Aorta (tissue), 5 donors: ENCODE measurements at regions of chr20 and their contacts with region 1.

Region 1: DNA sequence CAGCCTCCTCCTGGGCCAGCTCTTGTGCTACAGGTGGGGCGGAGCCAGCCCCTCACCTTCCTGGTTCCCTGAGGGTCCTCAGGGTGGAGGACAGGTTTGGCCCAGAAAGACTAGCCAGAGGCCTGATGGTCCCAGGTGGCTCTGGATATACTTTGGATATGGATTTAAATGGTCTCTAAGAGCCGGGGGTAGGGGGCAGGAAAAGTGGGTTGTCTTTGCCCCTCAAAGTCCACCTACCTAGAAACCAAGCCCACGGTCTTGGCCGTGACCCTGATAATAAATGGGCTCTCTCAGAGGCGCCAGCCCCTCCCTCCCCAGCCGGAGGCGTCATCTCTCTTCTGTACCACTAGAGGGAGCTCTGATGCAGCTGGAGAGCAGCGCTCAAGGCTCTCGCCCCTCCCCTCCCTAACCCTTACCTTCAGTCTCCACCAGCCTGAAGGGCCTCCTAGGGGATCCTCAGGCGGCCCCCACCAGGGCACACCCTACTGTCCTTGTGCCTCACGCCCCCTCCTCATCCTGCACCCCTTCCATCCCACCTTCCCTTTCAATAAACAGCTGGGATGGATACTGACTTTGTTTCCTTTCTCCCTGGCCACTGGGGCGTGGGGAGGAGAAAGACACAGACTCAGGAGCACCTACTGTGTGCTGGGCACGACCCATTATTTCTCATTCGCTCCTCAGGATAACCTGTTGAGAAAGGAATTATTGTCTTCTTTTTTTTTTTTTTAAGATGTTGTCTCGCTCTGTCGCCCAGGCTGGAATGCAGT is 7.6 kb downstream of the NRSN2 start:
- DNase-seq: peak; percentile 77 to 89
- ATAC-seq: peak; percentile 95
- H3K4me3 ChIP-seq: no peak overlapping the region
- H3K27ac ChIP-seq: no peak overlapping the region
- H3K4me1 ChIP-seq: no peaks in the 10 kb centered on the region
- H3K27me3 ChIP-seq: no peaks in the 10 kb centered on the region

Region 2: DNA sequence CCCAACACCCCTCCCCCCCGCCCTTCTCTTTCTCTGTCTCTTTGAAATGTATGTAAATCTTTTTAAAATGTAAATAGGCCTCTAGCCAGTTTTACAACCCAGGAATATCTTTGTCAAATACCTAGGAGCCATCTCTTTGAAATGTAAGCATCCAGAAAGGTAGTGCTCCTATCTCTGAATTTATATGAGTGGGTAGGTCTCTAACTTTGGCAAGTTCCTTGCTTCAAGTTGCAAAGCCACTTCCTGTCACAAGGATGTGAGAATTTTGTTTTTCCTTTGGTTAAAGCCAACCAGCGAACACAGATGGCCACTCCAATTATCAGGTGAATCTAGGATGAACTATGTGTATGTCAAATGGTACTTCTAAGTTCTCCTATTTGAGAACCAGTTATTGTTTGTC is 103.1 kb before region 1 on chr20:
- intact Hi-C with region 1: no loop called
- DNase-seq: no peak
- ATAC-seq: no peak
- H3K4me3 ChIP-seq: no peak overlapping the region
- H3K27ac ChIP-seq: no peak overlapping the region
- H3K4me1 ChIP-seq: no peaks in the 10 kb centered on the region
- H3K27me3 ChIP-seq: peaks cover 0 to 1% of the 10 kb centered on the region in 2 donors

Region 3: DNA sequence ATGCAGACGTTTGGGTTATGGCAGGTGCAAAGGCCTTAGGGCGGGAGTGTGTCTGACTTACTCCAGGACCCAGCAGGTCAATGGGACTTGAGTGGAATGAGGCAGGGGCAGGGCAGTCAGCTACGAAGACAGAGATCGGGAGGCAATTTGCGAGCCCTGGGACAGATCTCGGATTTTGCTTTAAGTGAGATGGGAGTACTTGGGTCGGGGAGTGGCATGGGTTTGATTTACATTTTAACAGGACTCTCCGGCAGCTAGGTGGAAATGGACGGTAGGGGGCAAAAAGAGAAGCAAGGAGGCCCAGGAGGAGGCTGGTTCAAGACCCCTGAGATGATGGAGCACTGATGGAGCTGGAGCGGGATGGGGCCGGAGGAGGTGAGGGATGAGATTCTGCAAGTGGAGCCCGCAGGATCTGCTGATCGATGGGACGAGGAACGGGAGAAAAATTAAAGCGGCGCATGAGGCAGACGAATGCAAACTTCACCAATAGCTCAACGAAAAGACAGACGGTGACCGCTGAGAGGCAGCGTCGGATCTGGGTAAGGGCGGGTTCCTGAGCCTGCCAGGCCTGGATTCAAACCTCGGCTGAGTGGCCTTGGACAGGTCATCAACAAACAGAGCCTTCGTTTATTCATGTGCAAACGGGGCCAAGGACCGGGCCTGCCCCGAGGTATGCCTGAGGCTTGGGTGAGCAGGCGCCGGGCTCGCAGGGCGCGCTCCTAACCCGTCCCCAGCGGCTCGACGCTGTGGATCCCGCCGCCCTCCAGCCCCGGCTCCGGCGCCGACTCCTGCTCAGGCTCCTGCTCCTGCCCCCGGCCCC is 52.9 kb after region 1 on chr20:
- intact Hi-C with region 1: loop called in 1 of 2 experiments (anchors 5 kb)
- DNase-seq: peak; percentile 88 to 92
- ATAC-seq: peak; percentile 90
- H3K4me3 ChIP-seq: peak overlapping the region; percentile 18 to 31
- H3K27ac ChIP-seq: peak overlapping the region in 1 of 2 donors; percentile 67
- H3K4me1 ChIP-seq: no peaks in the 10 kb centered on the region
- H3K27me3 ChIP-seq: no peaks in the 10 kb centered on the region

Region 4: DNA sequence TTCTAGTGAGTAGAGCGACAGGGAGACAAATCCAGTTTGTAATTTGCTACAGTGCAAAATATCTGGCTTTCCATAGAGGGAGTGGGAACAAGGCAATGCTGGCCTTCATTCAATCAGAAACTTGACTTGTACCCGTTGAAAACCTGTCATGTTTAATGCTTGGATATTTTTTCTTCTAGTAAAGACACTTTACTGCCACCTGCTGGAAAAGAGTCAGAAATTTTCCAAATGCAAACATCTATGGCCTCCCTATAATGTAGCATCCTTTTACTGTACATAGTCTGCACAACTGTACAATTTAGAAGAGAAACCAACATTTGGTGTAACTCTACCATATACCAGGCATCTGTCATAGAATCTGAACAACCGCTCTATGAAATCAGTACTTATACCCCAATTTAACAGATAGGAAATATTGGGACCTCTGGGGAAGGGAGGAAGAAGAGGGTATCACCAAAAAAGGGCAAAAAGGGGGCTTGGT is 124.5 kb after region 1 on chr20:
- intact Hi-C with region 1: loop called (anchors 1 to 2 kb)
- DNase-seq: no peak
- ATAC-seq: peak; percentile 56
- H3K4me3 ChIP-seq: no peak overlapping the region
- H3K27ac ChIP-seq: no peak overlapping the region
- H3K4me1 ChIP-seq: no peaks in the 10 kb centered on the region
- H3K27me3 ChIP-seq: no peaks in the 10 kb centered on the region

Region 5: GRCh38 chr20:645318-646106 is 291.0 kb after region 1 on chr20:
- intact Hi-C with region 1: loop called in 1 of 2 experiments (anchors 10 kb)
- DNase-seq: peak; percentile 63 to 88
- ATAC-seq: peak; percentile 78
- H3K4me3 ChIP-seq: no peak overlapping the region
- H3K27ac ChIP-seq: no peak overlapping the region
- H3K4me1 ChIP-seq: no peaks in the 10 kb centered on the region
- H3K27me3 ChIP-seq: no peaks in the 10 kb centered on the region

Region 6: DNA sequence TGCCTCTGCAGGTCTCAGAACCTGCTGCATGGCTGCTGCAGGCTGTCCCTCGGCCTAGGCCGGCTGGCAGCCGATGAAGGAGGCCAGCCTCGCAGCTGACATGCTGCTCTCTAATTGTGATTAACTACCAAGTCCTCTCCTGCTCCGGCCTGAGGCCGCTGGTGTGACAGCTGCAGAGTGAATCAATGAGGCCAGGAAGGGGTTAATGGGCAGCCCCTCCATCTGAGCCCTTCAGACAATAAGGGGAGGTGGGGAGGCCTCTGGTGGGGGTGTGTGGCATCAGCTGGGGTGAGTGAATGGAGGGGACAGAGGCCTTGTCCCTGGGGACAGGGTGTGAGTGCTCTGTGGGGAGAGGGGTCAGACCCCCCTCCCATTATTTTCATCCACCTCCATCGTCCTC is 379.4 kb after region 1 on chr20:
- intact Hi-C with region 1: loop called in 1 of 2 experiments (anchors 10 kb)
- DNase-seq: peak in 1 of 2 donors; percentile 36
- ATAC-seq: no peak
- H3K4me3 ChIP-seq: no peak overlapping the region
- H3K27ac ChIP-seq: no peak overlapping the region
- H3K4me1 ChIP-seq: no peaks in the 10 kb centered on the region
- H3K27me3 ChIP-seq: no peaks in the 10 kb centered on the region